ENCODE measurements at regions of chr13 and their contacts with region 1.

Region 1: GRCh38 chr13:51764184-51765141 is 39.5 kb downstream of the DHRS12 start:
- DNase-seq: peak; percentile 47
- H3K4me3 Mint-ChIP-seq: peak overlapping the region; percentile 75
- H3K27ac Mint-ChIP-seq: peak overlapping the region; percentile 95
- H3K4me1 Mint-ChIP-seq: peaks cover 30% of the 10 kb centered on the region
- H3K27me3 Mint-ChIP-seq: no peaks in the 10 kb centered on the region

Region 2: GRCh38 chr13:51047434-51048165 is 716.9 kb before region 1 on chr13:
- intact Hi-C with region 1: no loop called
- DNase-seq: no peak
- H3K4me3 Mint-ChIP-seq: no peak overlapping the region
- H3K27ac Mint-ChIP-seq: no peak overlapping the region
- H3K4me1 Mint-ChIP-seq: no peaks in the 10 kb centered on the region
- H3K27me3 Mint-ChIP-seq: peaks cover 17% of the 10 kb centered on the region

Region 3: GRCh38 chr13:51619614-51620013 is 144.8 kb before region 1 on chr13:
- intact Hi-C with region 1: loop called (anchors 2 kb)
- DNase-seq: no peak
- H3K4me3 Mint-ChIP-seq: no peak overlapping the region
- H3K27ac Mint-ChIP-seq: peak overlapping the region; percentile 11
- H3K4me1 Mint-ChIP-seq: peaks cover 41% of the 10 kb centered on the region
- H3K27me3 Mint-ChIP-seq: no peaks in the 10 kb centered on the region

Region 4: GRCh38 chr13:51729866-51730546 is 34.5 kb before region 1 on chr13:
- intact Hi-C with region 1: loop called (anchors 1 kb)
- DNase-seq: peak; percentile 19
- H3K4me3 Mint-ChIP-seq: no peak overlapping the region
- H3K27ac Mint-ChIP-seq: no peak overlapping the region
- H3K4me1 Mint-ChIP-seq: peaks cover 11% of the 10 kb centered on the region
- H3K27me3 Mint-ChIP-seq: no peaks in the 10 kb centered on the region

Region 5: GRCh38 chr13:51740698-51741097 is 23.8 kb before region 1 on chr13:
- intact Hi-C with region 1: loop called (anchors 2 kb)
- DNase-seq: no peak
- H3K4me3 Mint-ChIP-seq: no peak overlapping the region
- H3K27ac Mint-ChIP-seq: peak overlapping the region; percentile 81
- H3K4me1 Mint-ChIP-seq: peaks cover 25% of the 10 kb centered on the region
- H3K27me3 Mint-ChIP-seq: no peaks in the 10 kb centered on the region

Region 6: GRCh38 chr13:51811920-51812451 is 47.5 kb after region 1 on chr13:
- intact Hi-C with region 1: no loop called
- DNase-seq: no peak
- H3K4me3 Mint-ChIP-seq: no peak overlapping the region
- H3K27ac Mint-ChIP-seq: no peak overlapping the region
- H3K4me1 Mint-ChIP-seq: peaks cover 16% of the 10 kb centered on the region
- H3K27me3 Mint-ChIP-seq: peaks cover 7% of the 10 kb centered on the region

Region 7: DNA sequence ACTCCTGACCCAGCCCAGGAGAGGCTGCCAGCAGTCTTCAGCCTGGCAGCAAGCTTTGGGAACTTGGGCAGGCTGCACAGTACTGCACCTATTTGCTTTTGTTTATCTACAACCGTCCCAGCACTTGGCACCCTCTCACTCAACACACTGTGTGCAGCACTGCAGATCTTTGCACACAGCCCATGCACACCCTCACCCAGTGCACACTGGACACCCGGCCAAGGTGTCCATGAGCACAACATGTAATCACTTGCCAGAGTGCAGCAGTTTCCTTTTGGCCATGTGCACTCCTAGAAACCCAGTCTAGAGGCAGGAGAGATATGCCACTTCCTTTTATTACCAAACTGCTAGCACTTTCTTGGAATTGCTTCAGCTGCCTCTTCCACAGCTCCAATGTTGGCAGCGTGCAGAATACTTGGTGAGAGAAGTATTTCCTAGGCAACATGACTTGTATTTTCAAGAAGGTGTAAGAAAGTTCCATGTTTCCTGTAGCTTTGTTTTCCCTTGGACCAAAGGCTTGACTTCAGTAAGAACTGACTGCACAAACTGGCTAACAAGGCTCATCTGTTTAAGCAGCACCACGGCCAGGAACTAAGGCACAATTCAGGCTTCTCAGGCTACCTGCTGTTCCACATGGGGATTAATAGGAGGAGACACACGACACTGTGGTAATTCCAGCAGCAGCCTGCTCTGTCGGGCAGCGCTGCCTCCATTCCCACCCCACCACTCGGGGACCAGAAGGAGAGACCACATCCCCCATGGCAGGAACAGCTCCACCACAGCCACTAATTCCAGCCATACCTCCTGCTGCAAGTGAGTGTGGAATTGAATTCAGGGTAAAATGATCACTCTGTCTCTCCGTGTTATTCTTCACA is 231.5 kb after region 1 on chr13:
- intact Hi-C with region 1: no loop called
- DNase-seq: no peak
- H3K4me3 Mint-ChIP-seq: no peak overlapping the region
- H3K27ac Mint-ChIP-seq: no peak overlapping the region
- H3K4me1 Mint-ChIP-seq: peaks cover 1% of the 10 kb centered on the region
- H3K27me3 Mint-ChIP-seq: peaks cover 25% of the 10 kb centered on the region